ENCODE measurements at regions of chr14 and their contacts with region 1.

Region 1: DNA sequence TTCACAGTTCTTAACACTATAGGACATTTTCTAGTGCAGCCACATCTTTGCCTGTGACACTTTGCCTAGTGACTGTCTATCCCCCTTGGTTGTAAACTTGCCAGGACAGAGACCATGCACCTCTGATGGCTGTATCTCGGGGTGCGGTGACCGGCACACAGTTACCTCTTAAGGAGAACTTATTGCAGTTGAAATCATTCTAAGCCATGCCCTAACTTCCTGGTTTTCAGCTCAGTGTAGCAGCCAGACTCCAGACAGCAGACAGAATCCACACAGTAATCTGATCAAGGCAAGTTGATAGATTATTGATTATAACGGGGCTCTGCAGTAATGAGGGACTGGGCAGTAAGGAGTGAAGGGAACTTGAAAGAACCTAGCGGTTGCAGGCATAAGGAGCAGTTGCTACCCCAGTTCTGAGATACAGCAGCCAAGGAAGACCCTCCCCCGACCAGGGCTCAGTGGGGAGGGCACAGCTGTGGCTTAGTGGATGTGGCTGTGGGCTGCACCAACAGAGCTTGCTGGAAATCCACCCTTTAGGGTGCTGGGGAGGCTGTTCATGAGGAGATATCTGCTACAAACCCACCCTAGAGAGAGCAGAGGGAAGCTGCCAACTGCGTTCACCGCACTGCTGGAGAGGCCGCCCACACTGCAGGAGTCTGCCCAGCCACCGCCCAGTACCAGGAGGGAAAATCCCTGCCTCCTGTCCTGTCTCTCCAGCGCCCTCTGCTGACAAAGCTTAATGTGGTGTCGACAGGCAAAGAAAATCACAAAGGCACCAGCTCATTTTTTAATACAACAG is 58.2 kb upstream of the BEGAIN start:
- DNase-seq: peak; percentile 86
- ATAC-seq: peak; percentile 93 to 96

Region 2: GRCh38 chr14:100440187-100440631 is 205.2 kb before region 1 on chr14:
- intact Hi-C with region 1: loop called (anchors 5 to 10 kb)
- DNase-seq: peak; percentile 61
- ATAC-seq: peak; percentile 86 to 87

Region 3: DNA sequence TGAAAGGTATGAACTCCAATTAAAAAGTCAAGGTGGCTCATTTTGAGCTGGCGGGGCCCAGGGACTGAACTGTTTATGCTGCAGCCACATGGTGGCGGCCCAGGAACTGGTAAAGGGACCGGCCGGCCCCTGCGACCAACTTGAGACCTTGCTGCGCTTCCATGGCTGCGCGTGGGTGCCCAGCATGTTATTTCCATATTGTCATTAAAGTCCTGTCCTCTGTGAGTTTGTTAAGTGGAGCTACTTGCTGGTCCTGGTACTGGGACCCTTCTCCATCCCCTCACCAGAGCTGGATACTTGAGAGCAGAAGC is 120.5 kb before region 1 on chr14:
- intact Hi-C with region 1: no loop called
- DNase-seq: no peak
- ATAC-seq: no peak

Measured in left cardiac atrium (tissue), 4 donors.